Endothelial cell of umbilical vein (primary cell): ENCODE measurements at regions of chr10 and their contacts with region 1.

Region 1: DNA sequence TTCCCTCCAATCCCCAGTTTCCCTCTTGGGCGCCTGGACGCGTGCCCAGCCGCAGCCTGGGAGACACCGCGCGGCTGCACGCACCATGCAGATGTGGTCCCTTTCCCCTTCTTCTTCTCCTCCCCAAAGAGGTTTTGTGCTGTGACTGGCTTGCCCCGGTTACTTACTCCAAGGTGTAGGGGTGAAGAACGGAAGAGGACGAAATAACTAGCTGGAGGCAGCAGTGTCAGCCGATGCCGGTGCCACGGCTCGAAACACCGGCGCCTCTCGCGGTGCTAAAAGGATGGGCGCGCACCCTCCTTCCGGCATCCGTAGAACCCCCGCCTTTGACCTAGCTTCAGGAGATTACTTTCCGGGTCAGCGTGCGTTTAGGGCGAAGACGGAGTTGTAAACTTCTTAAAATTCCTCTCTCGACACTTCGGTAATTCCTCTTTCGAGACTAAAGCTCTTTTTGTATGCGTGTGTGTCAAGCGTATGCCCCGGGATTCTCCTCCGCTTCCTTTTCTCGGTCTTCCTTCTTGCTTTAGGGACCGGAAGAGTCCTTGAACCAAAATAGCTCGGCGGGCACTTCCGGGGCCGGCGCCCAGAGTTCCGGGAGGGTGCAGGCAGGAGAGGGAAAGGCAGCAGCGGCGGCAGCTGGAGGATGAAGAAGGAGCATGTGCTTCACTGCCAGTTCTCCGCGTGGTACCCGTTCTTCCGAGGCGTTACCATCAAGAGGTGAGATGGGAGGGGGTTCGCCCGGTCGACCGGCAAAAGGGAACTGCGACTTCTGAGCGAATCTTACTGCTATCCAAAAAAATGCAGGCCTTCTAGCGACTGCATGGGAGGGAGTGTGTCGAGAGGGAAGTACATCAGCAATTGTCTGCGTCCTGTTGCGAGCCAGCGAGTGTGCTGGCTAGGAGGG is at the starts of genes CDC123 and NUDT5:
- DNase-seq: peak; percentile 85
- H3K4me3 ChIP-seq: peak within 1 kb of the TSS; percentile 72 to 95 (median 86)
- H3K27ac ChIP-seq: peak within 1 kb of the TSS; percentile 78
- H3K4me1 ChIP-seq: peaks cover 21% of the 10 kb centered on the region
- H3K27me3 ChIP-seq: no peaks in the 10 kb centered on the region
- CTCF ChIP-seq: no peak
- POLR2A ChIP-seq: no peak
- total RNA-seq, gene CDC123: 97.3 and 106 TPM in 2 replicates
- total RNA-seq, gene NUDT5: 81.8 and 89.0 TPM in 2 replicates

Region 2: GRCh38 chr10:11793762-11794479 is 401.9 kb before region 1 on chr10:
- CTCF ChIA-PET with region 1: no interaction called
- POLR2A ChIA-PET with region 1: no interaction called
- dilution Hi-C with region 1: no loop called
- intact Hi-C with region 1: loop called (anchors 10 kb)
- DNase-seq: no peak
- H3K4me3 ChIP-seq: no peak overlapping the region
- H3K27ac ChIP-seq: no peak overlapping the region
- H3K4me1 ChIP-seq: peaks cover 15% of the 10 kb centered on the region
- H3K27me3 ChIP-seq: peaks cover 0 to 4% of the 10 kb centered on the region in 2 experiments
- CTCF ChIP-seq: no peak
- POLR2A ChIP-seq: no peak

Region 3: GRCh38 chr10:12042797-12043651 is 152.8 kb before region 1 on chr10 and contains the start of gene UPF2:
- CTCF ChIA-PET with region 1: no interaction called
- POLR2A ChIA-PET with region 1: no interaction called
- dilution Hi-C with region 1: no loop called
- intact Hi-C with region 1: loop called (anchors 2 kb)
- DNase-seq: peak; percentile 99
- H3K4me3 ChIP-seq: peak within 1 kb of the TSS; percentile 50 to 80 (median 56)
- H3K27ac ChIP-seq: peak within 1 kb of the TSS; percentile 98
- H3K4me1 ChIP-seq: peaks cover 5% of the 10 kb centered on the region
- H3K27me3 ChIP-seq: peaks cover 0 to 3% of the 10 kb centered on the region in 2 experiments
- CTCF ChIP-seq: no peak
- POLR2A ChIP-seq: no peak
- total RNA-seq, gene UPF2: 23.9 and 27.7 TPM in 2 replicates

Region 4: GRCh38 chr10:12129222-12130111 is 66.4 kb before region 1 on chr10 and contains the start of gene SEC61A2:
- CTCF ChIA-PET with region 1: no interaction called
- POLR2A ChIA-PET with region 1: no interaction called
- dilution Hi-C with region 1: no loop called
- intact Hi-C with region 1: loop called (anchors 2 kb)
- DNase-seq: peak; percentile 91
- H3K4me3 ChIP-seq: peak within 1 kb of the TSS; percentile 74 to 79 (median 78)
- H3K27ac ChIP-seq: peak within 1 kb of the TSS; percentile 67
- H3K4me1 ChIP-seq: peaks cover 2% of the 10 kb centered on the region
- H3K27me3 ChIP-seq: no peaks in the 10 kb centered on the region
- CTCF ChIP-seq: no peak
- POLR2A ChIP-seq: peak; percentile 76
- total RNA-seq, gene SEC61A2: 7.3 and 9.5 TPM in 2 replicates

Region 5: GRCh38 chr10:12214763-12215218 is 18.9 kb after region 1 on chr10:
- CTCF ChIA-PET with region 1: interaction called, 14 read pairs
- POLR2A ChIA-PET with region 1: no interaction called
- dilution Hi-C with region 1: no loop called
- intact Hi-C with region 1: no loop called
- DNase-seq: peak; percentile 65
- H3K4me3 ChIP-seq: no peak overlapping the region
- H3K27ac ChIP-seq: peak overlapping the region; percentile 23
- H3K4me1 ChIP-seq: peaks cover 6% of the 10 kb centered on the region
- H3K27me3 ChIP-seq: no peaks in the 10 kb centered on the region
- CTCF ChIP-seq: peak; percentile 42 to 51
- POLR2A ChIP-seq: no peak

Region 6: DNA sequence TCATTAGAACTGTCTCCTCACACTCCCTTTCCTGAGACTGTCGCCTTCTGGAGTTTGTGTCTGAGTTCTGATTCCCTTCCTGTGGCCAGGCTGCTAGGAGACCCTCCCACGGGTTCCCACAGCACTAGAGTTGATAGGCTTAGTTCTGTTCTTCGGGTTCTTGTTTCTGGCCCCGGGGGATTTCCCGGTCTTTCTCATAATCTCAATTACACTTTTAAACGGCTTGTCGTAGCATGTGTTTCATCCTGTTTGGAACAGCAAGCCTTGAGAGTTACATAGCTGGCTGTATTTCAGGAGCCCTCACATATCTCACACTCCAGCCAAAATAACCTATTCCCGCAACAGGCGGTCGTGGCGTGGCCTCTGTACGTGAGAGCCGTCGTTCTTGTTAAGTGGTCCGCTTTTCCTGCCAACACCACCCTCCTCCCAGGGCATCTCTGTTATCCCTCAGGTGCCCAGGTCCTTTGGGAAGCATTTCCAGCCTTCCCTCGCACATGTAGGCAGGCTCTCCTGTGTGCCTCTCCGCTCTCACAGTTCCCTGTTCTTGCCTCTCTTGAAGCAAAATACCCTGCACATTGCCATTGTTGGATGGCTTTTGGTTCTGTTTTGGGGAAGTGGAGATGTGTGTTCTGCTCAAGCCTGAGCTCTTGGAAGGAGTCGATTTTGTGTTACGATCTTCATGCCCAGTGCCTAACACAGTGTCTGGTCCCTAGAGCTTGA is 46.1 kb after region 1 on chr10:
- CTCF ChIA-PET with region 1: no interaction called
- POLR2A ChIA-PET with region 1: no interaction called
- dilution Hi-C with region 1: no loop called
- intact Hi-C with region 1: no loop called
- DNase-seq: no peak
- H3K4me3 ChIP-seq: no peak overlapping the region
- H3K27ac ChIP-seq: no peak overlapping the region
- H3K4me1 ChIP-seq: no peaks in the 10 kb centered on the region
- H3K27me3 ChIP-seq: no peaks in the 10 kb centered on the region
- CTCF ChIP-seq: no peak
- POLR2A ChIP-seq: no peak